Posterior cingulate gyrus (tissue), 11 donors: ENCODE measurements at regions of chr2 and their contacts with region 1.

Region 1: GRCh38 chr2:226832061-226832460 is 3.8 kb upstream of the RHBDD1 start:
- DNase-seq: no peak

Region 2: GRCh38 chr2:226977775-226978190 is 145.7 kb after region 1 on chr2:
- intact Hi-C with region 1: loop called (anchors 5 kb)
- DNase-seq: no peak